ENCODE measurements at regions of chr6 and their contacts with region 1.

Region 1: GRCh38 chr6:10837995-10838793 is at the start of gene MAK:
- DNase-seq: peak; percentile 47
- ATAC-seq: peak; percentile 89
- H3K4me3 ChIP-seq: peak within 1 kb of the TSS; percentile 60
- H3K27ac ChIP-seq: peak within 1 kb of the TSS; percentile 66
- H3K4me1 ChIP-seq: peaks cover 8% of the 10 kb centered on the region; the same call in 1 of the 2 replicates
- H3K27me3 ChIP-seq: no peaks in the 10 kb centered on the region
- CTCF ChIP-seq: no peak
- EP300 ChIP-seq: no peak; a peak in 1 of 4 replicates
- POLR2A ChIP-seq: peak; percentile 23; the same call in 1 of the 2 replicates
- RAD21 ChIP-seq: no peak
- polyA plus RNA-seq, gene MAK: 0.13 to 0.32 TPM

Region 2: DNA sequence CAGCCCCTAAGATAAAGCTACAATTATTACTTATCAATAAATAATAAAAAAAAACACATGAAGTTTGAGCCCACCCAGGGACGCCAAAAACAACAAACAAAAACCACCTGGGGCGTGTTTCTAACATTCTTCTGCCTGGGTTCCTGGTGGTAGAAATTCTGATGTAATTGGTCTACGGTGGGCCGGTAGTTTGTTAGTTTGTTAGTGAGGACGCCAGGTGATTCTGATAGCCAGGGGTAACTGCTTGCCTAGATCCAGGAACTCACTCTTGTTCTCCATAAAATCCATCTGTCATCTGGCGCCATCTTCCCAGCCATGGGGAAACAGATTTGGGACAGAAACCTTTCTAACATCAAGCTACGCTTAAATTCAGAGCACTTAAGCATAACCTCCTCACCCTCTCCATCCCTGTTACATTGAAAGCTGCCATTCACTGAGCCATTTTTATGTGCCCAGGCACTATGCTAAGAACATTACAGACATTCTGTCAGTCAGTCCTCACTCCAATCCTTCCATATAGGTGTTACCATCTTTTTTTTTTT is 49.4 kb after region 1 on chr6:
- CTCF ChIA-PET with region 1: interaction called, 5 read pairs
- POLR2A ChIA-PET with region 1: no interaction called
- RAD21 ChIA-PET with region 1: interaction called, 7 read pairs
- SMC1A ChIA-PET with region 1: interaction called, 12 read pairs
- in situ Hi-C with region 1: no loop called
- intact Hi-C with region 1: loop called (anchors 2 kb)
- DNase-seq: no peak
- ATAC-seq: no peak
- H3K4me3 ChIP-seq: no peak overlapping the region
- H3K27ac ChIP-seq: no peak overlapping the region
- H3K4me1 ChIP-seq: peaks cover 9% of the 10 kb centered on the region
- H3K27me3 ChIP-seq: peaks cover 8 to 11% of the 10 kb centered on the region in 2 experiments
- CTCF ChIP-seq: no peak
- EP300 ChIP-seq: no peak
- POLR2A ChIP-seq: no peak
- RAD21 ChIP-seq: no peak

Measured in GM12878 (cell line).